MCF 10A (cell line): ENCODE measurements at regions of chr10 and their contacts with region 1.

Region 1: GRCh38 chr10:71314028-71314693 is 4.9 kb upstream of the SLC29A3 start:
- DNase-seq: peak; percentile 35
- H3K4me3 Mint-ChIP-seq: no peak overlapping the region
- H3K27ac Mint-ChIP-seq: no peak overlapping the region
- H3K4me1 Mint-ChIP-seq: peaks cover 11% of the 10 kb centered on the region
- H3K27me3 Mint-ChIP-seq: no peaks in the 10 kb centered on the region
- CTCF ChIP-seq: peak; percentile 77

Region 2: DNA sequence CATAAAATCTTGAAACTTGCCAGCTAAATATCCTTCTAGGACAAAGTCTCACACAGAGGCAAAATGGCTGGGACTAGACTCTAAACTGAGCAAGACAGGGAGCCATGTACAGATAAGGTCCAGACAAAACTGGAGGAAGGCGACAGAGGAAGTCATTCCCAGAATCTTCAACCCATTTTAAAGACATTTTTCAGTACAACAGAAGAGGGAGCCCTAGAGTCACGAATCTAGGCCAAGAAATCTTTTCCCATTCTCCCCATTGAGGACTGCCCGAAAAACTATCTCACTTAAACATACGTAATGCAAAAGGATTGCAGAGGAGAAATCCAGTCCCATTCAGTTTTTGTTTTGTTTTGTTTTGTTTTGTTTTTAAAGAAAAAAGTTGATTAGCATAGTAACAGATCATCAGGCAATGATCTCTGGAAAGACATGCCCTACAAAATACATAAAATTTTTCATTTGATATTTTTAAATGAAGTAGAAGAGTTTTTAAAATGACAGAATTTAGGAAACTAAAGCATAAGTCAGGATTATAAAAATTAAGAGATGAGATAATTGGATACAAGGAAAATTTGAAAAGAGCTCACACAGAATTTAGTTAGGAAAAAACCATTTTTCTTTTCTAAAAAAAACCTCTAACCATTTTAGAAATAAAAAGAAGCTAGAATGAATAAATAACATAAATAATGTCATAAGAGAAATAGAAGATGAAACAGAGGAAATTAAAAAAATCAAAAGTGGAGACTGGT is 694.7 kb before region 1 on chr10:
- CTCF ChIA-PET with region 1: no interaction called
- POLR2A ChIA-PET with region 1: no interaction called
- intact Hi-C with region 1: no loop called
- DNase-seq: peak; percentile 54
- H3K4me3 Mint-ChIP-seq: no peak overlapping the region
- H3K27ac Mint-ChIP-seq: no peak overlapping the region
- H3K4me1 Mint-ChIP-seq: peaks cover 10% of the 10 kb centered on the region
- H3K27me3 Mint-ChIP-seq: no peaks in the 10 kb centered on the region
- CTCF ChIP-seq: peak; percentile 48

Region 3: DNA sequence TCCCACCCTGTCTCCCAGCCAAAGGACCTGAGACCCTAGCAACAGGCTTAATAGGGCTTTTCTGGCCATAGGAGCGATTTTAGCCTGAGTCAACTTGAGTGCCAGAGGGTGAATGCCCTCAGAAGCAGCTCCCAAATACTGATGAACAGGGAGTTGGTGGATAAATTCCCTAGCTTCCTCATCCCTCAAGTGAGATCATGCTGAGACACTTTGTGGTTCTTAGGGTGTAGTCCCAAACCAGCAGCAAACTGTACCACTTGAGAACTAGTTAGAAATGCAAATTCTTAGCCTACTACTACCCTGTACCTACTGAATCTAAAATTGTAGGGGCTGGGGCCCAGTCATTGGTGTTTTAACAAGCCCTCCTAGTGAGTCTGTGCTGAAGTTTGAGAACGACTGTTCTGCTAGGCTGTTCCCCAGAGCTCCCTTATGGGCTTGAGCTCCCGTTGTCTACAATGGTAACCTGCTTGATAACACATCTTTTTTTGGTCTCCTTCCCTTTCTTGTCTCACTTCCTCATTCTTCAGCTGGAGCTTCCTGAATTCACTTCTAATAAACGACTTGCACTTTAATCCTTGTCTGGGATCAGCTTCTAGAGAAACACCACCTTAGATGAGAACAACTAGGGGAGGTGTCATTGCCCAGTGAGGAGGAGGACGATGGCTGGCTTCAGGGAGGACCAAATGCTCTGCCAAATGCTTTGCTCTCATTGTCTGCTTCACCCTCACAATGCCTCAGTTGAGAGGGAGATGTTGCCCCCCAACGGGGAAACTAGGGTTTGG is 64.4 kb after region 1 on chr10:
- CTCF ChIA-PET with region 1: interaction called, 17 read pairs
- POLR2A ChIA-PET with region 1: interaction called, 20 read pairs
- intact Hi-C with region 1: loop called (anchors 1 kb)
- DNase-seq: no peak
- H3K4me3 Mint-ChIP-seq: no peak overlapping the region
- H3K27ac Mint-ChIP-seq: no peak overlapping the region
- H3K4me1 Mint-ChIP-seq: peaks cover 7% of the 10 kb centered on the region
- H3K27me3 Mint-ChIP-seq: no peaks in the 10 kb centered on the region
- CTCF ChIP-seq: no peak

Region 4: DNA sequence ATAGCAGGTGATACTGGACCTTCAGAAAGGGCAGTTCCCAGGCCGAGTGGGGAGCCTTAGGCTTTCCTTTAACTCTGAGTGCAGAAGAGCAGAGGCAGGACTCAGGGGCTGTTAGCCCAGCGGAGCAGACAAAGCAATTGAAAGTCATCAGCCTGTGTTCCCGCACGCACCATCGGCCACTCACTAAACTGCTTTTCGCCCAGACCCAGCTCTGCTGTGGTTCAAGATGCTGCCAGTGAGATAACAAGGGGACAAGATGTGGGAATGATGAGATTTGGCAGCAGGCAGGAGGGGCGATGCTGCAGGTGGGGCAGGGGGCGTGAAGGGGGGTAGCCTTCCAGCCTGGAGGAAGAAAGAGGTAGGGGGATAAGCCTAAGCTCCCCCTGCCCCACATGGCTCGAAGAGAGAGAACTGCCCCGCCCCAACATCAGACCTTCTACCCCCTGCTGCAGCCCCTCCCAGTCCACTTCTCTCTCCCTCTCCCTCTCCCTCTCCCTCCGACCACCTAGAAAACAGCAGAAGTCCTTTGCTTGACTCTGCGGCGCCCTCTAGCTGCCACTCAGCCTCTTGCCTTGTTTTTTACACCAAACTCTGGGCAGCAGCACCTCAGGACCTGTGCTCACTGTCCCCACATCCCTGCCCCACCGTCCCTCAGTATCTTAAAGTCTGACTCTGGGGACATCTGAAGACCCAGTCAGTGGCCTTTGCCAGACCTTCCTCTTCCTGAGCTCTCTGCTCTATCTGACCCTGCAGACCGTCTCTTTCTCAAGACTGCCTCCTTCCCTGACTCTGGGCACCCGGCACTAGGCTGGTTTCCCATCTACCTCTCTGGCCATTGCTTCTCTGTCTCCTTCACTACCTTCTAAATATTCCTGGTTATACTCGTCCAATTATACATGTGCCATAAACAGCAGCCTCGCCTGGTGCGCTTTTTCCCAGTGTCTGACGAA is 294.9 kb after region 1 on chr10:
- CTCF ChIA-PET with region 1: interaction called, 15 read pairs
- POLR2A ChIA-PET with region 1: no interaction called
- intact Hi-C with region 1: loop called (anchors 2 kb)
- DNase-seq: peak; percentile 61
- H3K4me3 Mint-ChIP-seq: no peak overlapping the region
- H3K27ac Mint-ChIP-seq: no peak overlapping the region
- H3K4me1 Mint-ChIP-seq: peaks cover 6% of the 10 kb centered on the region
- H3K27me3 Mint-ChIP-seq: peaks cover 57% of the 10 kb centered on the region
- CTCF ChIP-seq: peak; percentile 78

Region 5: DNA sequence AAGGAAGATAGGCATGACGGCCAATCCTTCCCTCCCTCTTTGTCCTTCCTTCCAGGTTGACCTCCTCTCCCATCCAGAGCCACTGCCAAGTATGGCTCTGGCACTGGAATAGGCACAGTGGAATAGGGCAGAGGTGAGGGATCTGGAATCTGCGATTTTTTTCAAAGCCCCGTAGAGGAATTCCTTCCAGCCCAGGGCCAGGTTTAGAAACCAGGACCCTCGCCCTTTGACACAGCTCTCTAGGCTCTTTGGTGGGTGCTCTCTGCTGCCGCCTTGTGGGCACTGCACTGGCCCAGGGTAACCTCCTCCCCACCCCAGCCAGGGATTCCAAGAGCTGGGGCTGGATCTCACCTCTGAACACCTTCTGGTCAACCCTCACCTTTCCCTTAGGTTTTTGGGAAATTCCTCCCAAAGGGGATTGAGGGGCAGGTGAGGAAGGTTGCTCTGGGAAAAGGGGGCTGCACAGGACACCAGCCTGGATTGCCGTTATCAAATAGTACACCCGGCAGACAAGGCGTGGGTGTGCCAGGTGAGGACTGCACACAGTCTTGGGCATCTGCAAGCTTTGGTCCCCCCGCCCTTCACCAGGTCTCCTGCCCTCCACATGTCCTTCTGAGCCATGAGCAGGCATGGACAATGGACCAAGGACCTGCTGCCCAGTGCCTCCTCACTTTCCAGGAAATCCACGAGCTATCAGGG is 382.6 kb after region 1 on chr10:
- CTCF ChIA-PET with region 1: interaction called, 14 read pairs
- POLR2A ChIA-PET with region 1: interaction called, 4 read pairs
- intact Hi-C with region 1: loop called (anchors 5 kb)
- DNase-seq: peak; percentile 65
- H3K4me3 Mint-ChIP-seq: no peak overlapping the region
- H3K27ac Mint-ChIP-seq: no peak overlapping the region
- H3K4me1 Mint-ChIP-seq: no peaks in the 10 kb centered on the region
- H3K27me3 Mint-ChIP-seq: no peaks in the 10 kb centered on the region
- CTCF ChIP-seq: peak; percentile 84

Region 6: GRCh38 chr10:71713135-71714030 is 399.2 kb after region 1 on chr10:
- CTCF ChIA-PET with region 1: interaction called, 25 read pairs
- POLR2A ChIA-PET with region 1: interaction called, 5 read pairs
- intact Hi-C with region 1: no loop called
- DNase-seq: peak; percentile 97
- H3K4me3 Mint-ChIP-seq: peak overlapping the region; percentile 41
- H3K27ac Mint-ChIP-seq: peak overlapping the region; percentile 93
- H3K4me1 Mint-ChIP-seq: peaks cover 23% of the 10 kb centered on the region
- H3K27me3 Mint-ChIP-seq: no peaks in the 10 kb centered on the region
- CTCF ChIP-seq: no peak

Region 7: GRCh38 chr10:71812016-71812912 is 498.1 kb after region 1 on chr10:
- CTCF ChIA-PET with region 1: interaction called, 4 read pairs
- POLR2A ChIA-PET with region 1: interaction called, 4 read pairs
- intact Hi-C with region 1: loop called (anchors 1 kb)
- DNase-seq: peak; percentile 62
- H3K4me3 Mint-ChIP-seq: no peak overlapping the region
- H3K27ac Mint-ChIP-seq: no peak overlapping the region
- H3K4me1 Mint-ChIP-seq: no peaks in the 10 kb centered on the region
- H3K27me3 Mint-ChIP-seq: no peaks in the 10 kb centered on the region
- CTCF ChIP-seq: peak; percentile 91